ENCODE measurements at regions of chr15 and their contacts with region 1.

Region 1: DNA sequence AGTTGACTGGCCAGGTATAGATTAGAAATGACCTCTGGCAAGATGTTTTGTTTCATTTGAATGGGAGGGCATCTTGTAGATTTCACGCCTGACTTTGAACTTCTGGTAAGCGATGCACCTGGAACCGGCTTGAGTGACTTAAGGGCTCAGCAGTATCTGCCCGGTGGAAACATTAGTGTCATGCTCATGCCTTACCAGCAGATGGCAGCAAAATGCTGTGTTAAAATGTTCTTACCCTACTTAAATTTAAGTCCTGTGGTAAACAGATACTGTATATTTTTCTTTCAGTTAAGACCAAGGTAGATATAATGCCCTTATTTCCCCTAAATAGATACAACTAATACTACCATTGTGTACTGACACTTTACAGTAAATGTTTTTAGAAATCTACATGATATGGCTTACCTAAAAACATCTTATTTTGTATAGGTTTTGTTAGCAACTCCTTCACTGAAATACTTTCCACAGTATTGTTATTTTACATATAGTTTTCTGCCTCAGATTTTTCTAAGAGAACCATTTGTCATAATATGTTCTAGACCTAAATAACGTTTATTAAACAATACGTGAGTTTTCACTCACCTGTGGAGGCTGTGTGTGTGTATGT is 25.5 kb downstream of the ASB7 start:
- DNase-seq: peak; percentile 79
- H3K4me3 Mint-ChIP-seq: no peak overlapping the region
- H3K27ac Mint-ChIP-seq: no peak overlapping the region
- H3K4me1 Mint-ChIP-seq: peaks cover 15% of the 10 kb centered on the region
- H3K27me3 Mint-ChIP-seq: no peaks in the 10 kb centered on the region

Region 2: DNA sequence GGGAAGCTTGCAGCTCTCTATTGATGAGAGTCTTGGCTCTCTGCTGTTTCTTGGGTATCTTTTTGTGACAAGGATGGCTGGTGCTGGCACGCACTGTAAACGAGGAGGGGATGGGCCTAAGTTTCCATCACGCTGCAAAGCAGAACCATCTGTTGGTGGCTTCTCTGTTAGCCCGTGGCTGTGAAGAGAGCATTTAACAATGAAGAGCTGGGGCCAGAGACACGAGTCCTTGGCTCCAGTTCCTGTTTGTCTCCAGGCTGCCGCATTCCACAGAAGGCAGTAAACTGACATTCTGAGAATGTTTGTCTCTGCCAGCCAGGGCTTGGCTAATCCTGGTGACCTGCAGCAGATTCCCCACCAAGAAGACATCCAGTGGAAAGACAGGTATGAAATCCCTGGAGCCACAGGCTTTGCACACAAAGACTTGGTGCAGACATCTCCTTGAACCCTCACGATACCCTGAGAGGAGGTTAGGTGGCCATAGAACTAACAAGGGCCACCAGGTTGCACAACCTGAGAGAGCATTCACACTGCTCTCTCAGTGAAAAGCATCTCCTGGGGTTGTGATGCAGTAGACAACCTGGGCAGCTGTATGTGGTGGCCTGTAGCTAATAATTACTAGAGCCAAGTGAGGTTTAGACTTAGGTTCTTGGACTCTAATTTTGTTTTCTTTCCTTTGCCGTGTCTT is 105.4 kb after region 1 on chr15:
- CTCF ChIA-PET with region 1: no interaction called
- intact Hi-C with region 1: no loop called
- DNase-seq: no peak
- H3K4me3 Mint-ChIP-seq: no peak overlapping the region
- H3K27ac Mint-ChIP-seq: no peak overlapping the region
- H3K4me1 Mint-ChIP-seq: no peaks in the 10 kb centered on the region
- H3K27me3 Mint-ChIP-seq: no peaks in the 10 kb centered on the region

Region 3: DNA sequence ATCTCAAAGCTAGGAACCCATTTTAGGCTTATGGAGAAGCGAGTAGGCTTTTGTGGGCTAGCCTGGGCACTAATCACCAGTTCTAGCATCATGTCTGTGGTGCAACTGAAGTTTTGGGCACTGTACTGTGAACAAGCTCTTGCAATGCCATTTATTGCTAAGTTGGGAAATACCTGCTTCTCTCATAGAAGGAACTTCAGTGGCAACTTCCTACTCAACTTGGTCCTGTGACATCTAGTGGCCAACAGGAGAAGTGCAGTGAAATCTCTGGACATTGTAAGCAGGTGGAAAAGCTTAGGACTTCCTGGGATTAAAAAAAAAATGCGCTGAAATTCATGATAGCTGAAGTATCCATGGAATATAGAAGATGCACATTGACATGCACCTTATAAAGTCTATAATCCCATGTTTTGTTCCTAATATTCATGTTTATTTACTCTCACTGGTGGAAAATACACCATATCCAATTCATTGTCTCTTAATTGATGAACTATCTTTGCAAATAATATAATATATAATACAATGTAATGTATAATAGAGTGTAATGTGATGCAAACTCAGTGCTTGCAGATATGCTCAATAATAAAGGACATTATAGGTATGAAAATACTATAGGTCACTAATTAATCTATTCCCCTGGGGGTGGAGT is 245.3 kb after region 1 on chr15:
- CTCF ChIA-PET with region 1: interaction called, 9 read pairs
- intact Hi-C with region 1: loop called (anchors 1 kb)
- DNase-seq: peak; percentile 74
- H3K4me3 Mint-ChIP-seq: no peak overlapping the region
- H3K27ac Mint-ChIP-seq: no peak overlapping the region
- H3K4me1 Mint-ChIP-seq: no peaks in the 10 kb centered on the region
- H3K27me3 Mint-ChIP-seq: peaks cover 26% of the 10 kb centered on the region